ENCODE measurements at regions of chr7 and their contacts with region 1.

Region 1: DNA sequence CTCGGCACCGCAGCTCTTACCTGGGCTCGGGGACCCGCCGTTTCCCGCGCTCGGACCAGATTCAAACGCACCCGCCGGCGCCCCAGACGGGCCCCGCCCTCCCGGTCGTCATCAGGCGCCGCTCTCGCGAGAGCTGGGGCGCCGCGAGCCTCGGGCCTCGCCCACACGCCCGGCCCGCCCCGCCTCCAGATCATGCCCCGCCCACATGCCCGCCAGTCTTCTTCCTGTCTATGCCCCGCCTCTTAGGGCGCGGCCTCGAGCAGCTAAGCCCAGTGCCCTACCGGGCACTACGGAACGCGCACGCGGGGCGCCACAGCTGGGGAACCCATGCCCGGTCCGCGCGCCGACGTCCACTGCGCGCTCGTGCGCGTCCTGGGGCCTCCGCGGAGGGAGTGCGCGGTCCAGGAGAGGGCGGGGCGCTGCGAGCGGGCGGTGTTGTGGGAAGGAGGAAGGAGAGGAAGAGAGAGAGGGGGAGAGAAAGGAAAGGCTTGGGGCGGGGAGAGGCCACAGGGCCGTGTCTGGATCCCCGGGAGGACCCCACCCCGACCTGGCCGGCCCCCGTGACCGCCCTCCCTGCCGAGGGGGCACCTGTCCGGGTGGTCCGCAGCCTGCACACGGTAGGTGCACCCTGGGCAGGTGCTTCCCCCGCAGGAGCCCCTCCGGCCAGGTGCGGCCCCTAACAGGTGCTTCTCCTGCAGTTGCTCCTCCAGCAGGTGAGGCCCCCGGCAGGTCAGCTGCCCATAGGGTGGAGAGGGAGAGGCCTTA is at the start of gene NCAPG2:
- DNase-seq: peak; percentile 99
- ATAC-seq: peak; percentile 98
- H3K4me3 Mint-ChIP-seq: peak within 1 kb of the TSS; percentile 95
- H3K27ac Mint-ChIP-seq: peak within 1 kb of the TSS; percentile 91
- H3K4me1 Mint-ChIP-seq: peaks cover 39% of the 10 kb centered on the region
- H3K27me3 Mint-ChIP-seq: no peaks in the 10 kb centered on the region
- total RNA-seq, gene NCAPG2: 123 to 126 TPM

Region 2: GRCh38 chr7:158760936-158761335 is 56.0 kb after region 1 on chr7:
- POLR2A ChIA-PET with region 1: no interaction called
- DNase-seq: no peak
- ATAC-seq: no peak
- H3K4me3 Mint-ChIP-seq: no peak overlapping the region
- H3K27ac Mint-ChIP-seq: no peak overlapping the region
- H3K4me1 Mint-ChIP-seq: peaks cover 3% of the 10 kb centered on the region
- H3K27me3 Mint-ChIP-seq: no peaks in the 10 kb centered on the region

Region 3: DNA sequence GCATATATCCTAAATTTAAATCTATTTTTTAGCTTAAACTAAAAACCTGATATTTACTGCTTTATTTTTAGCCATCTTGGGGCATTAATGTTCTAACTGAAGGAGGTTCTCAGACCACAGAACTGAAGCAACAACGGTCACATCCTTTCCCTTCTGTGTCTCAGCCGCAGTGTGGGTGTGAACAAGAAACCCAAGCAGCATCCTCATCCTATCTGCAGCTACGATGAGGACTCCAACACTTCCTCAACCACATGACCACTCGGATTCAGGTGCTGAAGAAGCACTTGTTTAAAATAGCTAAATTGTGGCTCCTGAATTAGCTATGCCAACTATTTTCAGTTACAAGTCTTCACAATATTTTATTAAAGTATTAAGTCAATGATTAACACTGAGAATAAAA is 119.1 kb after region 1 on chr7:
- POLR2A ChIA-PET with region 1: interaction called, 10 read pairs
- DNase-seq: no peak
- ATAC-seq: peak; percentile 77
- H3K4me3 Mint-ChIP-seq: peak overlapping the region; percentile 32
- H3K27ac Mint-ChIP-seq: peak overlapping the region; percentile 77
- H3K4me1 Mint-ChIP-seq: peaks cover 48% of the 10 kb centered on the region
- H3K27me3 Mint-ChIP-seq: no peaks in the 10 kb centered on the region

Region 4: GRCh38 chr7:158976849-158977593 is 272.1 kb after region 1 on chr7:
- POLR2A ChIA-PET with region 1: interaction called, 10 read pairs
- DNase-seq: peak; percentile 92
- ATAC-seq: peak; percentile 74
- H3K4me3 Mint-ChIP-seq: peak overlapping the region; percentile 86
- H3K27ac Mint-ChIP-seq: peak overlapping the region; percentile 94
- H3K4me1 Mint-ChIP-seq: peaks cover 15% of the 10 kb centered on the region
- H3K27me3 Mint-ChIP-seq: no peaks in the 10 kb centered on the region

Measured in activated naive CD8-positive, alpha-beta T cell treated with anti-CD3 and anti-CD28 coated beads, Interleukin-2, amount 10 ng/mL, durations not matched to agents 7 days and 5 days (primary cell).